ENCODE measurements at regions of chr7 and their contacts with region 1.

Region 1: GRCh38 chr7:106731187-106731586 is 70.2 kb upstream of the CCDC71L start:
- DNase-seq: peak; percentile 75
- H3K4me3 ChIP-seq: no peak overlapping the region
- H3K27ac ChIP-seq: no peak overlapping the region
- H3K4me1 ChIP-seq: peaks cover 15% of the 10 kb centered on the region
- CTCF ChIP-seq: no peak

Region 2: GRCh38 chr7:104862719-104863118 is 1868.5 kb before region 1 on chr7:
- CTCF ChIA-PET with region 1: no interaction called
- POLR2A ChIA-PET with region 1: interaction called, 12 read pairs
- intact Hi-C with region 1: no loop called
- DNase-seq: peak; percentile 18
- H3K4me3 ChIP-seq: no peak overlapping the region
- H3K27ac ChIP-seq: no peak overlapping the region
- H3K4me1 ChIP-seq: no peaks in the 10 kb centered on the region
- CTCF ChIP-seq: peak; percentile 63